Esophagus muscularis mucosa (tissue), 4 donors: ENCODE measurements at regions of chr4 and their contacts with region 1.

Region 1: GRCh38 chr4:98143001-98143899 is at the start of gene STPG2:
- DNase-seq: peak; percentile 96
- H3K4me3 ChIP-seq: peak within 1 kb of the TSS; percentile 61 to 74 (median 68)
- H3K27ac ChIP-seq: peak within 1 kb of the TSS; percentile 74 to 80 (median 76)
- H3K4me1 ChIP-seq: peaks cover 0 to 7% (median 6%) of the 10 kb centered on the region in 4 donors
- H3K27me3 ChIP-seq: peaks cover 0 to 7% (median 0%) of the 10 kb centered on the region in 4 donors
- CTCF ChIP-seq: peak; percentile 14 to 33 (median 17)
- EP300 ChIP-seq: no peak
- POLR2A ChIP-seq: no peak
- total RNA-seq, gene STPG2: 0.17 to 0.26 TPM in 2 of 4 donors, not detected in the others

Region 2: GRCh38 chr4:98110214-98110613 is 33.0 kb before region 1 on chr4:
- intact Hi-C with region 1: no loop called
- DNase-seq: no peak
- H3K4me3 ChIP-seq: no peak overlapping the region
- H3K27ac ChIP-seq: no peak overlapping the region
- H3K4me1 ChIP-seq: peaks cover 0 to 4% (median 0%) of the 10 kb centered on the region in 4 donors
- H3K27me3 ChIP-seq: no peaks in the 10 kb centered on the region
- CTCF ChIP-seq: no peak
- EP300 ChIP-seq: no peak
- POLR2A ChIP-seq: no peak

Region 3: DNA sequence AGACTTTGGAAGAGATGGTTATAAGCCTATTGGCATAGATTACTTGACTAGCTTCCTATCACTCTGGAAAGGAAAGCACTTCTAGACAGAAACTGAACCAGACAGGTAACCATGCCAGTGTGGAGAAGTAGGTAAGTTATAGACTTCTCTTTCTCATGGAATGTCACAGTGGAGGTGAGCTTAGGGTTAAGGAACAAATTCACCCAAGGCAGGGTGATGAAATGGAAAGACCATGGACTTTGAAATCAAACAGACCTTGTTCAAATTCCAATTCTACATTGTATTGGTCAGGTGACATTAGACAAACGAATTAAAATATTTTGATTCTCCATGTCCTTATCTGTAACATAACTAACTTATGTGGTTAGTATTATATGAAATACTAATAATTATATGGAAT is 110.2 kb after region 1 on chr4:
- intact Hi-C with region 1: loop called (anchors 5 kb)
- DNase-seq: no peak
- H3K4me3 ChIP-seq: no peak overlapping the region
- H3K27ac ChIP-seq: no peak overlapping the region
- H3K4me1 ChIP-seq: no peaks in the 10 kb centered on the region
- H3K27me3 ChIP-seq: no peaks in the 10 kb centered on the region
- CTCF ChIP-seq: no peak
- EP300 ChIP-seq: no peak
- POLR2A ChIP-seq: no peak